Common myeloid progenitor, CD34-positive (primary cell): ENCODE measurements at regions of chr11 and their contacts with region 1.

Region 1: DNA sequence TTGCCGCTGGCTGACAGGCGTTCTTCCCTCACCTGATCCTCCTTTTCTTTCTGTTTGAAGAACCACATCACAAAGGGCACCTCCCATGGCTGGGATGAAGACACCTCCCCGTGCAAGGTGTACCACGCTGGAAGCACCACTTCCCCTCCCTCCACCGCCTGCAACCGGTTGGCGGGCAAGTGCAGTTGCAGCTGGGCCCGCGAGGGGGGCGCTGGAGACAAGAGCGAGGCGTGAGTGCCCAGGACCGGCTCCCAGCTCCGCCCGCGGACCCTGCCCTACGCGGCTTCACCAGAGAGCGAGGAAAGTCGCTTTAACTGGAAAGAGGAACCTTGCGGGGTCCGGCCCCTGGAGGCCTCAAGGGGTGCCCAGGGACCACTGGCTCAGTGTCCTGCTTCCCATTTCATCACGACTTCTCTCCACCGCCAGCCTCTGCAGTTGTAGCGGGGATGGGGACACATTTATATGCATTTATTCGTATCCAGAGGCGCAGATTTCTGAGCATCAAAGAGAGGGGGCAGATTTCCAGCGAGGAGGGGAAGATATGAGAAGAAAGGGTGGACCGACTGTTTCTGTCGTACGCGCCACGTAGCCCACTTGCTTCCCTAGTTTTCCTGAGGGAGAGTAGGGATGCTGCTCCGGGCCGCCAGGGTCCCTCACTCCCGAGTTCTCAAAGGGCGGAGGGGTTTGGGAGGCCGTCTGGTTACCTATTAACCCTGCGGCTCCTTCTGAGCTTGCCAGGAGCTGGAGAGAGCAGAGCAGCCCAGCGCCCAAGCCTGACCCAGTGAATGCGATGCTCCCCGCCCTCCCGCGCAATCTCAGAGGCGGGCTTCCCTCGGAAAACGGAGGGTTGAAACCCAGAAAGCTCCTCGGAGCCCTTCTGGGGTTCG is 3.5 kb downstream of the ESAM start:
- DNase-seq: peak; percentile 85 to 94 (median 91)
- H3K4me3 ChIP-seq: peak overlapping the region in 5 of 7 experiments; percentile 31 to 87 (median 69)
- H3K27ac ChIP-seq: no peak overlapping the region
- H3K4me1 ChIP-seq: peaks cover 1 to 61% (median 57%) of the 10 kb centered on the region in 4 experiments
- H3K27me3 ChIP-seq: no peaks in the 10 kb centered on the region

Region 2: GRCh38 chr11:124656774-124657630 is 101.6 kb before region 1 on chr11:
- CTCF ChIA-PET with region 1: interaction called, 31 read pairs
- POLR2A ChIA-PET with region 1: no interaction called
- DNase-seq: no peak
- H3K4me3 ChIP-seq: no peak overlapping the region
- H3K27ac ChIP-seq: no peak overlapping the region
- H3K4me1 ChIP-seq: no peaks in the 10 kb centered on the region
- H3K27me3 ChIP-seq: no peaks in the 10 kb centered on the region

Region 3: DNA sequence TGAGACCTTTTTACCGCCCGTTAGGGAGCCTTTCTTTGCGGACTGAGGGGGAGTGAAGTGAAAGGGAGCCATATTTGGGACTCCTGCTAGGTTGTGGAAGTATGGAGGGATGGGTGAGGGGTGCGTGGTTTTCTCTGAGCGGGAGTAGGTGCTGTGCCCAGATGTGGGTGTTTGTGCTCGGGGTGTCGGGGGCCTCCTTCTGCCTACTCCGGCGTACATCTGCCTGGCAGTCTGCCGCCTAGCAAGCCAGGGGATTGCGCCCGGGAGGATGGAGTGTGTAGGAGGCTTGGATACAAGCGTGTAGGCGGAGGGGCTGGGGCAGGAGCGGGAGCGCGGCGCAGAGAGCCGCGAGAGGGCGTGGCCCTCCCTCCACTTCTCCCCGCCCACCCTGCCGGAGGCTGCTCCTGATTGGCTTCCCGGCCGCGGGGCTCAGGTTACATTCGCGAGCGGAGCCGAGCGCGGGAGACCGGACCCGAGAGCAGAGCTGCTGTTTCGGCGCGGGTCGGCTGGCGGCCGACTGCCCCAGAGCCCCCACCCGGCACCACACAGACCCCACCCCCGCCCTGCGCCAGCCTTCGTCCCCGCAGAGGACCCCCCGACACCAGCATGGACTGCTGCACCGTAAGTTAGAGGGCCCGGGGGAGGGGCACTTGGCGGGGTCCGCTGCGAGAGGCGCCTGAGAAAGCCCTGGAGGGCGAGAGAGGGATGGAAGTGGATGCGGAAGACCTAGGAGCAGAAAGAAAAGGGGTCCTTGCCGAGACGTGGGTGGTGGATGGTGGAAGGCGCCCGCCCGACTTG is 18.9 kb before region 1 on chr11 and contains the start of gene NRGN:
- CTCF ChIA-PET with region 1: interaction called, 205 read pairs
- POLR2A ChIA-PET with region 1: interaction called, 3 read pairs
- DNase-seq: peak; percentile 78 to 88 (median 85)
- H3K4me3 ChIP-seq: peak within 1 kb of the TSS; percentile 40 to 84 (median 75)
- H3K27ac ChIP-seq: no peak within 1 kb of the TSS
- H3K4me1 ChIP-seq: peaks cover 0 to 55% (median 45%) of the 10 kb centered on the region in 4 experiments
- H3K27me3 ChIP-seq: no peaks in the 10 kb centered on the region

Region 4: GRCh38 chr11:124788521-124788920 is 30.0 kb after region 1 on chr11:
- CTCF ChIA-PET with region 1: interaction called, 54 read pairs
- POLR2A ChIA-PET with region 1: no interaction called
- DNase-seq: no peak
- H3K4me3 ChIP-seq: no peak overlapping the region
- H3K27ac ChIP-seq: no peak overlapping the region
- H3K4me1 ChIP-seq: no peaks in the 10 kb centered on the region
- H3K27me3 ChIP-seq: peaks cover 0 to 2% (median 0%) of the 10 kb centered on the region in 5 experiments

Region 5: DNA sequence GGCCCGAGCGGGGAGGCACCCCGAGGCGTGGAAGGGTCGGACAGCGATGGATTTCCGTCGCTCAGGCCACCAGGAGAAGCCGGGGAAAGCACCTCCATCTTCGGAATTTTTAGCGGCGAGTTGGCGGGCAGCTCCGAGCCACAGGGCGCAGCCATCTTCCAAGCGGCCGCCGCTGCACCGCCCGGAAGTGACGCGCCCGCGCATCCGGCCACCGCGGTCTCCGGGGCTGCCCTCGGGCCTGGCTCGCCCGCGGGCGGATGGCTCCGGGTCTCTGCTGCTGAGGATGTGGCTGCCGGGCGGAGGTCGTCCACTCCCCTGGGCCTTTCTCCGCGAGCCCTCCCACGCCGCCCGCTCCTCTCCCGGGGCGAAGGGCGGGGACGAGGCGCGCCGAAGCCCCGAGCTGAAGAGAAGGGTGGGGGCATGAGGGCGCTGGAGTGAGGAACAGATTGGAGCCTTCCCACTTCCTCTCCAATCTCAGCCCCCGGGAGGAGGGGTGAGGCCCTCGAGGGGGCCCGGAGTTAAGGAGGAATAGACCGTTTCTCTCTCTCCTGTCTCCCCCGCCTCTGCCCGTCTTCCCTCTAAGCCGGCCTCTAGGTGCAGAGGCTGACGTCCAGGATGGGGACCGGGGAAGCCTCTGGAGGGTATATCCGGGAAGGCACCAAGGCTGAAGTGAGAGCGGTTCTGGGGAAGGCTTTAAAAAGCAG is 41.8 kb after region 1 on chr11 and contains the start of gene MSANTD2:
- CTCF ChIA-PET with region 1: interaction called, 43 read pairs
- POLR2A ChIA-PET with region 1: no interaction called
- DNase-seq: peak; percentile 65 to 82 (median 74)
- H3K4me3 ChIP-seq: peak within 1 kb of the TSS; percentile 72 to 85 (median 81)
- H3K27ac ChIP-seq: peak within 1 kb of the TSS in 1 of 2 experiments; percentile 68
- H3K4me1 ChIP-seq: peaks cover 11 to 18% (median 15%) of the 10 kb centered on the region in 4 experiments
- H3K27me3 ChIP-seq: peaks cover 0 to 20% (median 16%) of the 10 kb centered on the region in 5 experiments

Region 6: GRCh38 chr11:124821995-124822730 is 63.6 kb after region 1 on chr11:
- CTCF ChIA-PET with region 1: no interaction called
- POLR2A ChIA-PET with region 1: no interaction called
- DNase-seq: no peak
- H3K4me3 ChIP-seq: no peak overlapping the region
- H3K27ac ChIP-seq: no peak overlapping the region
- H3K4me1 ChIP-seq: no peaks in the 10 kb centered on the region
- H3K27me3 ChIP-seq: peaks cover 0 to 22% (median 3%) of the 10 kb centered on the region in 5 experiments

Region 7: GRCh38 chr11:124875943-124876817 is 117.6 kb after region 1 on chr11:
- CTCF ChIA-PET with region 1: no interaction called
- POLR2A ChIA-PET with region 1: no interaction called
- DNase-seq: peak; percentile 95 to 98 (median 98)
- H3K4me3 ChIP-seq: peak overlapping the region; percentile 40 to 89 (median 72)
- H3K27ac ChIP-seq: peak overlapping the region in 1 of 2 experiments; percentile 75
- H3K4me1 ChIP-seq: peaks cover 0 to 53% (median 42%) of the 10 kb centered on the region in 4 experiments
- H3K27me3 ChIP-seq: peaks cover 0 to 44% (median 28%) of the 10 kb centered on the region in 5 experiments